ENCODE measurements at regions of chr20 and their contacts with region 1.

Region 1: DNA sequence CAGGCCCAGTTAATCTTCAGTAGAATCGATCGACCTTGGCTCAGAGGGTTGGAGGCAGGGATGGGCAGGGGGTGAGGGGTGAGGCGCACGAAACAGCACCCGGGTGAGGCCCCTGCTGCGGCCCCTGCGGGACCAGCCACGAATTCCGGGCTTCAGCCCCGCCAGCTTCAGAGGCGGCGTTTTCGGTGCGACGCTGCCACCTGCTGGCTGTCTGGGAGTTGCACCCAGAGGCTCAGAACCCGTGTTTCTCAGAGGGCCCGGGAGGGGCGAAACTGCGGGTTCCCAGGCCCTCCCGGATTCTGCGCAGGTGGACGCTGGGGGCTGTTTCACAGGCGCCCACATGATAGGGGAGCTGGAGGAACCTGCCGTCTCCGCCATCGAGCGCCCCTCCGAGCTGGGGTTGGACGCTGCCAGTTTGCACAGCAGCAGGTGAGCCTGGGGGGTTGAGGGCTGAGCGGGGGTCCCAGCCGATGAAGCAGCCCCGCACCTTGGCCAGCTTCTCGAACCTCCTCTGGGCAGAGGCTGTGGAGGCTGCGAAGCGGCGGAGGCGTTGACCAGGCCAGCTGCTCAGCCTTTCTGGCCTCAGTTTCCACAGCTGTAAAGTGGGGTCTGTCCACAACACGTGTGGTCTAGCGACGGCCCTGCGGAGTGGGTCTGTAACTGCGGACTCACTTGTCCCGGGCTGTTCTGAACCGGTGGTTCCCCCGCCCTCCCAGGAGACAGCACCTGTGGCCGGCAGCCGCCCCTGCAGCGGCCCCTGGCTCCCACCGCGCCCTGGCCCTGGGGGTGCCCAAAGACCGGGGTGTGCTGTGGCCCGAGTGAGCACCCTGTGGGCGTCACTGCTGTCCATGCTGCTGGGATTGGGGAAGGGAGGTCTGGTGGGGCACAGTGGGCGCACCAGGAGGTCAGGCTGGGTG is 2.5 kb upstream of the BHLHE23 start:
- DNase-seq: peak; percentile 59 to 66
- H3K4me3 ChIP-seq: no peak overlapping the region
- H3K27ac ChIP-seq: no peak overlapping the region
- H3K4me1 ChIP-seq: peaks cover 0 to 19% of the 10 kb centered on the region in 2 donors
- H3K27me3 ChIP-seq: peaks cover 35% of the 10 kb centered on the region
- CTCF ChIP-seq: peak; percentile 82 to 95 (median 87)
- POLR2A ChIP-seq: no peak

Region 2: DNA sequence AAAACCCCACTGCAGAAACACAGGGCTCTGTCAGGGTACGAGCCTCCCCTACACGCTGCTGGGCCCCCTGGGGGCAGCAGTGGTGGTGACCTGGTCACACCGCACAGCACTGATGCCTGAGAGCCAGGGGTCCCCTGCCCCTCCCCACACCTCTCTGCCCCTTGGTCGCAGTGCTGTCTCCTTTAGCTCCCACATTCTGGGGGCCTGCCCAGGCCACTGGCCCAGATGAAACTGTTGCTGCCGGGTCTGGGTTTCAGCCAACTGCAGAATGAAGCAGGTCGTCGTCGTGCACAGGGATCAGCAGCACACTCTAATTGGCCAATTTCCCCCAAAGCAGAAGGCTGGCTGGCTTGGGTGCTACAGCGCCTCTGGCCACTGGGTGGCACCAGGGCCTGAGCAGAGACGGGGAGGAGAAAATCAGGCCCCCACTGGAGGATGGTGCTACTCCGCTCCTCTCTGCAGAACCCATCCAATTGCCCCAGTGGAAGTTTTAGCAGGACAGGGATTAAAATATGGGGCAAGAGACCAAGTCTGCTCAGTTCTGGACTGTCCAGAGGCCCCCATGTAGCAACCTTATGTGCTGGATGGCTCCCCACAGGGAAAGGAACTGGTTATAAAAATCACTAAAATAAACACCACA is 109.1 kb before region 1 on chr20:
- intact Hi-C with region 1: loop called (anchors 5 kb)
- DNase-seq: peak; percentile 71 to 78
- H3K4me3 ChIP-seq: no peak overlapping the region
- H3K27ac ChIP-seq: peak overlapping the region in 1 of 3 donors; percentile 38
- H3K4me1 ChIP-seq: peaks cover 17 to 20% of the 10 kb centered on the region in 2 donors
- H3K27me3 ChIP-seq: no peaks in the 10 kb centered on the region
- CTCF ChIP-seq: peak; percentile 80 to 90 (median 88)
- POLR2A ChIP-seq: peak in 1 of 2 donors; percentile 5

Region 3: DNA sequence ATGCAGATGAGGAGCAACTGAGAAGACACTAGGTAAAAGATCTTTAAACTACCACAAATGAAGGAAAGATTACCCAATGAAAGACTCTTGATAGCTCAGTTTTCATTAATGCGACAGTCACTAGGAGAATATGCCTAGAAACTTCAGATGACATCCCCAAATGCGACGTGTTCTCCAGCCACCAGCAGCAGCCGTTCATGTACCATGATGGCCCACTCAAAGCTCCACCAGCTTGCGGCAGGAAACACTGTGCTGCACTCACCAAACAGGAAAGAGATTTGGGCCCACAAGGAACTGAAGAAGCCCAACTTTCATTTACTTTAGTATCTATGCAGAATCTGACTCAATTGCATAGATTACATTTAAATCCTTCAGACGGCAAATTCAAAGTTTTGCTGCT is 90.5 kb before region 1 on chr20:
- intact Hi-C with region 1: no loop called
- DNase-seq: no peak
- H3K4me3 ChIP-seq: no peak overlapping the region
- H3K27ac ChIP-seq: no peak overlapping the region
- H3K4me1 ChIP-seq: peaks cover 69 to 83% of the 10 kb centered on the region in 2 donors
- H3K27me3 ChIP-seq: no peaks in the 10 kb centered on the region
- CTCF ChIP-seq: no peak
- POLR2A ChIP-seq: no peak

Region 4: DNA sequence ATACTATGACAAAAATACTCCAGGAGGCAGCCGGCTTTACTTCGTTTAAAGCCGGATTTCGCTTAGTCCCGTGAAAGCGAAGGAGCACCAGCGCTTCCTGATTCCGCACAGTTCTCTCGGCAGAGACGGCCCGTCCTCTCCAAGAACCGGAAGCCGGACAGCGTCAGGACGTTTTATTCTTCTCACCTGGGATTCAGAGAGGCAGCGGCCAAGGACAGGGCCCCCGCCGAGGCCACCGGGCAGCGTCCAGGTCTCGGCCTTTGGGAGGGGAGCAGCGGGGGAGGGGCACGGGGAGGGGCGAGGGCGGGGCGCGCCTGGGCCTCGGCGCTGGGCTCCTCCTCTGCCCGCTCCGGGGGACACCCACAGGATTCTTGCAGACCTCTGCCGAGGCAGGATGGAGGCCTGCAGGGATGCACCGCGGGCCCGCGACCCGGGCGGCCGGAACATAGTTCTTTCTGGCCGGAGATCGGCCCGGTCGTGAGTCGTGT is 80.2 kb before region 1 on chr20:
- intact Hi-C with region 1: no loop called
- DNase-seq: peak; percentile 82 to 88
- H3K4me3 ChIP-seq: peak overlapping the region in 2 of 3 donors; percentile 23 to 35
- H3K27ac ChIP-seq: peak overlapping the region; percentile 10 to 79 (median 66)
- H3K4me1 ChIP-seq: peaks cover 33 to 38% of the 10 kb centered on the region in 2 donors
- H3K27me3 ChIP-seq: no peaks in the 10 kb centered on the region
- CTCF ChIP-seq: no peak
- POLR2A ChIP-seq: peak in 1 of 2 donors; percentile 48

Region 5: GRCh38 chr20:62972270-62973032 is 36.9 kb before region 1 on chr20:
- intact Hi-C with region 1: loop called (anchors 2 kb)
- DNase-seq: peak; percentile 86 to 87
- H3K4me3 ChIP-seq: no peak overlapping the region
- H3K27ac ChIP-seq: no peak overlapping the region
- H3K4me1 ChIP-seq: peaks cover 5 to 7% of the 10 kb centered on the region in 2 donors
- H3K27me3 ChIP-seq: peaks cover 13% of the 10 kb centered on the region
- CTCF ChIP-seq: peak; percentile 61 to 94 (median 88)
- POLR2A ChIP-seq: no peak

Measured in thyroid gland (tissue), 4 donors.